WTC11 (cell line): ENCODE measurements at regions of chr12 and their contacts with region 1.

Region 1: DNA sequence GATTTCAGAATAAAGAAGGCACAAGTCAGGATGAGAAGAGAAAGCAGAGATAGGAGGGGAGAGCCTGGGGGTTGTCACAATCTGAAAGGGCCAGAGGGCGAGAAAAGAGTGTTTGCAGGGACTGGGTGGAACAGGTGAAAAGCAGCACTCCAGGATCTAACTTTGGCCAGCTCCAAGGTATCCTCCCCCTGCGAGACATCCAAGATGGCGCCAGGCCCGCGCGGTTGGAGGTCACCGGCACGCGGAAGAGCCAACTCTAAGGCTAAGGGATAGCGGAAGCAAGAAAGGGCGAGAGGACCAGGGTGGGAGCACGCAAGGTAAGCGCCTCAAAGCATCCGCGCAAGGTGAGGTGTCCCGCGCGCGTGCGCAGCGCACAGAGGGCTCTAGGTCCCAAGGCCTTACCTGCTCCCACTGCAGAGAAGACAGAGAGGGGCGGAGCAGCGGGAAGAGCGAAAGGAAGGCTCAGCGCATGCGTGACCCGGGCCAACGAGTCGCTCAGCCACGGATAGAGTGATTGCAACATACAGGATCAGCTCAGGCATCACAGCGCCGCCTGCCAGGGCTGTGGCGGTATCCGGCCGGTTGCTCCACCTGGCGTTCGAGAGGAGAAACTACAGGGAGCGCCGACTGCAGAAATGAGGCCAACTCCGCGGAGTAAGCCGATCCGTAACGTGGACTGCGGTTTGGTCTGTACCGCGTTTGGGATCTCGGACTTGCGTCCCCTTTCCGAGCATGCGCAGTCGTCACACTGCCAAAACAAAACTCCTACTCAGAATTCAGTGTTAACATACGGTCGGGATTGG is at the start of gene ATP5MC2:
- DNase-seq: peak; percentile 97
- ATAC-seq: peak; percentile 88
- H3K4me3 Mint-ChIP-seq: peak within 1 kb of the TSS; percentile 95
- H3K27ac Mint-ChIP-seq: peak within 1 kb of the TSS; percentile 98
- H3K4me1 Mint-ChIP-seq: peaks cover 42% of the 10 kb centered on the region
- H3K27me3 Mint-ChIP-seq: no peaks in the 10 kb centered on the region; the same call in 1 of the 2 replicates
- CTCF ChIP-seq: peak; percentile 83
- total RNA-seq, gene ATP5MC2: 411 to 527 TPM (median 517 TPM) in 3 replicates

Region 2: GRCh38 chr12:53659011-53659551 is 16.8 kb before region 1 on chr12:
- CTCF ChIA-PET with region 1: interaction called, 20 read pairs
- POLR2A ChIA-PET with region 1: interaction called, 9 read pairs
- DNase-seq: no peak
- ATAC-seq: peak; percentile 92
- H3K4me3 Mint-ChIP-seq: no peak overlapping the region
- H3K27ac Mint-ChIP-seq: peak overlapping the region; percentile 96
- H3K4me1 Mint-ChIP-seq: peaks cover 14% of the 10 kb centered on the region
- H3K27me3 Mint-ChIP-seq: no peaks in the 10 kb centered on the region
- CTCF ChIP-seq: no peak

Region 3: GRCh38 chr12:53696285-53696654 is 20.4 kb after region 1 on chr12:
- CTCF ChIA-PET with region 1: interaction called, 12 read pairs
- POLR2A ChIA-PET with region 1: interaction called, 5 read pairs
- DNase-seq: peak; percentile 74
- ATAC-seq: peak; percentile 94
- H3K4me3 Mint-ChIP-seq: peak overlapping the region; percentile 78
- H3K27ac Mint-ChIP-seq: peak overlapping the region; percentile 100
- H3K4me1 Mint-ChIP-seq: peaks cover 35% of the 10 kb centered on the region
- H3K27me3 Mint-ChIP-seq: peaks cover 59% of the 10 kb centered on the region
- CTCF ChIP-seq: no peak